Calu3 (cell line): ENCODE measurements at regions of chr2 and their contacts with region 1.

Region 1: GRCh38 chr2:7427293-7428060 is 510.3 kb downstream of the RNF144A start:
- DNase-seq: peak; percentile 44
- H3K4me3 Mint-ChIP-seq: no peak overlapping the region
- H3K27ac Mint-ChIP-seq: no peak overlapping the region
- H3K4me1 Mint-ChIP-seq: peaks cover 30% of the 10 kb centered on the region
- H3K27me3 Mint-ChIP-seq: no peaks in the 10 kb centered on the region
- CTCF ChIP-seq: peak; percentile 35

Region 2: GRCh38 chr2:7685342-7686015 is 258.0 kb after region 1 on chr2:
- CTCF ChIA-PET with region 1: interaction called, 3 read pairs
- intact Hi-C with region 1: loop called (anchors 10 kb)
- DNase-seq: no peak
- H3K4me3 Mint-ChIP-seq: no peak overlapping the region
- H3K27ac Mint-ChIP-seq: peak overlapping the region; percentile 56
- H3K4me1 Mint-ChIP-seq: peaks cover 55% of the 10 kb centered on the region
- H3K27me3 Mint-ChIP-seq: no peaks in the 10 kb centered on the region
- CTCF ChIP-seq: no peak

Region 3: GRCh38 chr2:8754106-8754776 is 1326.8 kb after region 1 on chr2:
- CTCF ChIA-PET with region 1: no interaction called
- intact Hi-C with region 1: loop called (anchors 2 kb)
- DNase-seq: no peak
- H3K4me3 Mint-ChIP-seq: no peak overlapping the region
- H3K27ac Mint-ChIP-seq: no peak overlapping the region
- H3K4me1 Mint-ChIP-seq: no peaks in the 10 kb centered on the region
- H3K27me3 Mint-ChIP-seq: no peaks in the 10 kb centered on the region
- CTCF ChIP-seq: no peak